Activated T-helper 1 cell treated with anti-CD3 and anti-CD28 coated beads, Interleukin-12 subunit alpha, Interleukin-12 subunit beta, Interleukin-2, Interleukin-4 antibody, amounts not matched to agents 30 ng/mL and 10 ng/mL and 1 ng/mL, durations not matched to agents 14 hours and 24 hours and 36 hours (primary cell): ENCODE measurements at regions of chr7 and their contacts with region 1.

Region 1: DNA sequence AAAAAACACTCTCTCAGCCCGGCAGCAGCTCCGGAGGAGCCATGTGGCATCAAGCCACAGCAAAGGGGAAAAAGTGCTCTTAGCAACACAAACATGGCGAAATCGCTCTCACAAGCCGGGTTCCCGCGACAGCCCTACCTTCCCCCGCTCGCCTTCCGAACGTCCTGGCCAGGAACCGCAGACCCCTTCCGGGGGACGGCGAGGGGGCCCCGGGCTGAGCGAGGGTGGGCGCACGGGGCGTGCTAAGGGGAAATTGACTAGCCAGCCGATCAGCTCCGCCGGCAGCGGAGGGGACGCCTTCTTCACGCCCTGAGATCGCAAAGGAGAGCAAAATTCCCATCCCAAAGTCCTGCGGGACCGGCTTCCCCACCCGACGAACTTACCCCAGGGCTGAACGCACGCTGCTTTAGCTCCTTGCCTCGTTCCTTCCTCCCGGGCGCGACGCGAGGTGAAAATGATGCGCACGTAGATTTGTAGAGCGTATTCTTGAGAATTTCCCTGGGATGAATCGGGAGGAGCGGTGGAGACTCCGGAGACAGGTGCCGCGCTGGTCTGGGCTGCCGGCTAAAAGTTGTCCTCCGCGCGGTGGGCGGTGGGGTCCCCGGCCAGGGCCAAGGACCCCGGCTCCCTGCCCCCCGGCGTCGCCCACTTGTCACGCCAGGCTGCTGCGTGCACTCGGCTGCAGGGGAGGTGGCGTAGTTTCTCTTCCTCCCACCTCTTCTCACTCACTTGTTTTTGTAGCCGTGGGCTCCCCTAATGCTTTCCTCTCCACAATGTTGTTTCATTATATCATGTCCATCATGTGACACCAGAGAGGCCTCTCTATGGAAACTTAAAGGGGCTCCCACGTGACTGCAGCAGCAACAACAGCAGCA is 220.1 kb upstream of the MKLN1 start:
- DNase-seq: peak; percentile 75
- H3K4me3 Mint-ChIP-seq: peak overlapping the region; percentile 99
- H3K27ac Mint-ChIP-seq: peak overlapping the region; percentile 100
- H3K4me1 Mint-ChIP-seq: peaks cover 65% of the 10 kb centered on the region
- H3K27me3 Mint-ChIP-seq: no peaks in the 10 kb centered on the region

Region 2: GRCh38 chr7:130896898-130897514 is 210.6 kb before region 1 on chr7:
- intact Hi-C with region 1: loop called (anchors 5 kb)
- DNase-seq: peak; percentile 53
- H3K4me3 Mint-ChIP-seq: peak overlapping the region; percentile 5
- H3K27ac Mint-ChIP-seq: peak overlapping the region; percentile 89
- H3K4me1 Mint-ChIP-seq: peaks cover 90% of the 10 kb centered on the region
- H3K27me3 Mint-ChIP-seq: no peaks in the 10 kb centered on the region

Region 3: DNA sequence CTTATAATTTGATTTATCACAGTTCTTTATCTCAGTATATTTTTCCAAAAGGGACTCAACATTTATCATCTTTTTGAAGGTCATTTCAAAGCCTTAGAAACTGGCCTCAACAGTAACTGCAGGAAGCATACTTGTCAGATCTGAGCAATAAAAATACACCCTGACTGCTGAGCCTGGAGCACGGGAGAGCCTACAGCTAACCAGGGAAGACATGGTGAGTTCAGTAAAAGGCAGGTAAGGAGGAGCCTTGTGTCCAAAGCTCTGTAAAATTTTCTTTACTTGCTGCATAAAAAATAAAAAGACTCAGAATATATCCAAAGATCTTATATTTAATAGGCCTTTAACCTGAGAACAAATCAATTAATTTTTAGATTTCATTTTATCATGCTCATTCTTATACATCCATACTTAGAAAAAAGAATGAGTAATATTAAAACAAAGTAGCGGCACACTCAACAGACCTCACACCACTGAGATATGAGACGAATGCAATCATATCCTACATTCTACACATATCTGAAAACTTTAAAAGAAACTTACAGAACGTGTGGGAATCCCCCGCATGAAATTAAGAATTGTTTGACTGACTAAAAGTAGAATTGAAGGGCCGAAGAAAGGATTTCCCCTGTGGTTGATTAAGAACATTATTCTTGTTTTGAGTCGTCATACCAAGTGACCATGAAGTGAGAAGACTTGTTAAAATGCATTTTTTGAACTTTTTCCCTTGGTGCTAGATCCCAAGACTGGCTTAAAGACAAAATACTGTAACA is 76.3 kb before region 1 on chr7:
- intact Hi-C with region 1: loop called (anchors 1 kb)
- DNase-seq: no peak
- H3K4me3 Mint-ChIP-seq: peak overlapping the region; percentile 42
- H3K27ac Mint-ChIP-seq: peak overlapping the region; percentile 81
- H3K4me1 Mint-ChIP-seq: peaks cover 79% of the 10 kb centered on the region
- H3K27me3 Mint-ChIP-seq: no peaks in the 10 kb centered on the region

Region 4: DNA sequence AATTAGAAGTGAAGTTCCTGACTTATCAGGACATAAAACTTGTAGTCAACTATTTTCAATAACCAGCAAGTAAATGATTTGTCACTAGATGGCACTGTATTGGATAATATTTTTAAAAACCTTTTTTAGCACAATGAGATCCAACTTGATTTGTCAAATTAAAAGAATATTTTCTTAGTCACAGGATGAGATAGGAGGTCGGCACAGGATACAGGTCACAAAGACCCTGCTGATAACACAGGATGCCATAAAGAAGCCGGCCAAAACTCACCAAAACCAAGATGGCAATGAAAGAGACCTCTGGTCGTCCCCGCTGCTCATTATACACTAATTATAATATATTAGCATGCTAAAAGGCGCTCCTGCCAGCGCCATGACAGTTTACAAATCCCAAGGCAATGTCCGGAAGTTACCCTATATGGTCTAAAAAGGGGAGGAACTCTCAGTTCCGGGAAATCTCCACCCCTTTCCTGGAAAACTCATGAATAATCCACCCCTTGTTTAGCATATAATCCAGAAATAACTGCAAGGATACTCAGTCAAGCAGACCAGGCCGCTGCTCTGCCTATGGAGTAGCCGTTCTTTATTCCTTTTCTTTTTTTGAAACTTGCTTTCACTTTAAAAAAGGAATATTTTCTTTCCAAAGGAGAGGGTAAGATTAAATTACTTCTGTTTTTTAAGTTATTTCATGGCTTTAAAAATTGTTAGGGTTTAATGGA is 35.6 kb before region 1 on chr7:
- intact Hi-C with region 1: loop called (anchors 1 kb)
- DNase-seq: no peak
- H3K4me3 Mint-ChIP-seq: no peak overlapping the region
- H3K27ac Mint-ChIP-seq: no peak overlapping the region
- H3K4me1 Mint-ChIP-seq: peaks cover 60% of the 10 kb centered on the region
- H3K27me3 Mint-ChIP-seq: no peaks in the 10 kb centered on the region

Region 5: GRCh38 chr7:131231381-131232220 is 124.0 kb after region 1 on chr7:
- intact Hi-C with region 1: loop called (anchors 1 kb)
- DNase-seq: peak; percentile 65
- H3K4me3 Mint-ChIP-seq: peak overlapping the region; percentile 50
- H3K27ac Mint-ChIP-seq: peak overlapping the region; percentile 86
- H3K4me1 Mint-ChIP-seq: peaks cover 62% of the 10 kb centered on the region
- H3K27me3 Mint-ChIP-seq: no peaks in the 10 kb centered on the region

Region 6: DNA sequence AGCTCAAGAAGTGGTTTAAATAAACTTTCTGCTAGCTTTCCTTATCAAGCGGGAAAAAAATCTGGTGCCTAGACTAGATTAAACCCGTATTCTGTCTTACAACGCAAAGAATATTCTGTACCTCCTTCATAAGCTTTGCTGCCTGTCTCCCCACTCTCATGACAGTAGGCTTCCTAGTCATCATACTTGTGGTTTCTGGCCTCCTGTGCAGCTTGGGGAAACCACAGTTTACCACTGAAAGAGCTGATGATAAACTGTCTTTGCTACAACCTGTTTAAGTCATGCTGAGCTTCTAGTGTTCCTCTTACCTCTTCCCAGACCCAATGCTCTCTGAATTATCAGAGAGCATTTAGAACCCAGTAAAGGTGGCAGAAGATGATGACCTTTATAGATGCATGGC is 393.8 kb after region 1 on chr7:
- intact Hi-C with region 1: loop called (anchors 2 kb)
- DNase-seq: peak; percentile 61
- H3K4me3 Mint-ChIP-seq: no peak overlapping the region
- H3K27ac Mint-ChIP-seq: peak overlapping the region; percentile 28
- H3K4me1 Mint-ChIP-seq: peaks cover 49% of the 10 kb centered on the region
- H3K27me3 Mint-ChIP-seq: no peaks in the 10 kb centered on the region